Activated CD4-positive, alpha-beta memory T cell treated with anti-CD3 and anti-CD28 coated beads, Interleukin-2, amount 10 ng/mL, durations not matched to agents 7 days and 5 days (primary cell): ENCODE measurements at regions of chr2 and their contacts with region 1.

Region 1: DNA sequence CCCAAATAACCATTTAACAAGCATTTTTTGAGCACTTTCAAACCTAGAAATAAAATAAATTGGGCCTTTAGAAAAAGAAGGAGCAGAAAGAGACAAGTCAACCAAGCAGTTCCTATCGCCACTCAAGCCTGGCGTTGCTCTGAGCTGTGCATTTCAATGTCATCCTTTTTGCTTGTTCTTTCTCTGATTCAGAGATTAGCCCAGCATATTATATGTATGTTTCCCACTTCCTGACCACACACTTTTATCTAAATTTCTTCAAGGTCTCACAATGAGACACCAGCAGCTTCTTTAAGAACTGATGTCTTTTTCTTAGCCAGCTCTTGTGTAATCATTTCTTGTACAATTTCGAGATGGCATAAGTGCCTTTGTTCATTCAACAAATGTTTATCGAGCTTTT is 344.5 kb upstream of the ID2 start:
- DNase-seq: peak; percentile 48
- H3K4me3 Mint-ChIP-seq: peak overlapping the region; percentile 25
- H3K27ac Mint-ChIP-seq: peak overlapping the region; percentile 66
- H3K4me1 Mint-ChIP-seq: peaks cover 33% of the 10 kb centered on the region
- H3K27me3 Mint-ChIP-seq: peaks cover 5% of the 10 kb centered on the region

Region 2: DNA sequence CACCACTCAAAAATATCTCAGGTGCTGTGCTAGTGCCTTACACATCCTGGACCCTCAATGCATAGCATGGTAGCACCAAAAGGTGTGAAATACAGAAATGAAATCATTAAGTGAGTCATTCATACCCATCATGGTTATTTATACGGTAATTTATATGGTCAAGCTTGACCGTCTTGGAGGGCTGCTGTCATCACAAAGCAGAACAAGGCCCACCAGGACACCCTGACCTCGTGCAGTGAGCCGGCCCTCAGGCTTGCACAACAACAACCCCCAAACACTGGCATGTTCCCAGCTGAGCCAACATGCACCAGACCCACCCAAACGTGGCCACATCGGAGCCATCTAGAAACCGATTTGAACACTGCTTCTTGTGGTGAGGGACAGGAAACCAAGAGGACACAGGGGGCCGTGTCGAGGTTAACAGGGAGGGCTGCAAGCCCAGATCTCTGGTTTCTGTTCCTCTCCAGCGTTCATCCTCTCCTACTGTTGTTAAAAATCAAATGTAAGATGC is 33.9 kb before region 1 on chr2:
- CTCF ChIA-PET with region 1: no interaction called
- POLR2A ChIA-PET with region 1: interaction called, 11 read pairs
- DNase-seq: peak; percentile 88
- H3K4me3 Mint-ChIP-seq: peak overlapping the region; percentile 44
- H3K27ac Mint-ChIP-seq: peak overlapping the region; percentile 91
- H3K4me1 Mint-ChIP-seq: peaks cover 88% of the 10 kb centered on the region
- H3K27me3 Mint-ChIP-seq: no peaks in the 10 kb centered on the region

Region 3: DNA sequence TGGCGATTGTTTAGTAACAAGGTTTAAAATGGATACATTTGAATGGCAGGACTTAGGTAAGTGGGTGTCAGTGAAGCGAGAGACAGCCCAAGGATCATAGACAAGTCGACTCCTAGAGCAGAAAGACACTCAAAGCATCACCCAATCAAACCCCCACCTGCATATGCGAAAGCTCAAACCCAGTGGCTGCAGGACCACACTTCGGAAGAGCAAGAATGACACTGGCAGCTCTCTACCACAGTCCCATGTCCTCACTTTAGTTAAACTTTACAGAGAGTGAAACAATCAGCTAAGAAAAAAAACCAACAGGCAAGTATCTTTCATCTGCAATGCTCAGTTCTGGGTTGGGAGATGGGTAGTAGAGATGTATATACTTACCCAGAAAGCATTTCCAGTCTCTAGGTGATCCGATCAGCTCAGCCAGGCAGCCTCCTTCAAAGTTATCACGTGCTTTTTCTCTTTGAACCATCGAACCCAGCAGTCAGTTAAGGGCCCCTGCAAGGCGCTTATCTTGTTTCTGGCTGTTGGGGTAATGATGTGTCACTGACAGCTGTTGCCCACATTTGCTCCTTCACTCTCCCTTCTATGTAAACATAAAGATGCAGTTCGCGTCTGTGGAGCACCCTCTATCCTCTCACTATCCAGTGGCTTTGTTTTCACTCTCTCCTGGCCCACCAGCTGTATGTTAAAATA is 13.0 kb before region 1 on chr2:
- CTCF ChIA-PET with region 1: interaction called, 4 read pairs
- POLR2A ChIA-PET with region 1: interaction called, 11 read pairs
- DNase-seq: no peak
- H3K4me3 Mint-ChIP-seq: no peak overlapping the region
- H3K27ac Mint-ChIP-seq: no peak overlapping the region
- H3K4me1 Mint-ChIP-seq: peaks cover 43% of the 10 kb centered on the region
- H3K27me3 Mint-ChIP-seq: peaks cover 9% of the 10 kb centered on the region

Region 4: GRCh38 chr2:8488001-8488738 is 150.8 kb after region 1 on chr2:
- CTCF ChIA-PET with region 1: no interaction called
- POLR2A ChIA-PET with region 1: no interaction called
- DNase-seq: peak; percentile 70
- H3K4me3 Mint-ChIP-seq: peak overlapping the region; percentile 81
- H3K27ac Mint-ChIP-seq: peak overlapping the region; percentile 84
- H3K4me1 Mint-ChIP-seq: peaks cover 78% of the 10 kb centered on the region
- H3K27me3 Mint-ChIP-seq: no peaks in the 10 kb centered on the region

Region 5: DNA sequence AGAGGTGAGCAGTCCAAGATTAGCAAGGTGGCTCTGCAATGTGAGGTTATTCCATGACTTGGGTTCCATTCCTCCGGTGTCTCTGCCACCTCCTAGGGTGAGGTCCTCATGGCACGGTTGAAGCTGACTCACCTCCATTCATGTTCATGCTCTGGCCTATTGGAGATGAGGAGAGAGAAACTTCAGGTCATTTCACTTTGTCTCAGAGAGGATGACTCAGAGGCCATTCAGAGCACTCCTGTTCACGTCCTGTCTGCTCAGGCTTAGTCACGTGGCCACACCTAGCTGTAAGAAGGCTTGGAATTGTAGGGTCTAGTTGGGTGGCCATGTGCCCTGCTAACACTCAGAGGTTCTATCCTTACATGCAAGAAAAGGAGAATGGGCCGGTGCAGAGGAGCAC is 733.7 kb after region 1 on chr2:
- CTCF ChIA-PET with region 1: no interaction called
- POLR2A ChIA-PET with region 1: no interaction called
- DNase-seq: no peak
- H3K4me3 Mint-ChIP-seq: no peak overlapping the region
- H3K27ac Mint-ChIP-seq: no peak overlapping the region
- H3K4me1 Mint-ChIP-seq: peaks cover 4% of the 10 kb centered on the region
- H3K27me3 Mint-ChIP-seq: peaks cover 20% of the 10 kb centered on the region